ENCODE measurements at regions of chr6 and their contacts with region 1.

Region 1: DNA sequence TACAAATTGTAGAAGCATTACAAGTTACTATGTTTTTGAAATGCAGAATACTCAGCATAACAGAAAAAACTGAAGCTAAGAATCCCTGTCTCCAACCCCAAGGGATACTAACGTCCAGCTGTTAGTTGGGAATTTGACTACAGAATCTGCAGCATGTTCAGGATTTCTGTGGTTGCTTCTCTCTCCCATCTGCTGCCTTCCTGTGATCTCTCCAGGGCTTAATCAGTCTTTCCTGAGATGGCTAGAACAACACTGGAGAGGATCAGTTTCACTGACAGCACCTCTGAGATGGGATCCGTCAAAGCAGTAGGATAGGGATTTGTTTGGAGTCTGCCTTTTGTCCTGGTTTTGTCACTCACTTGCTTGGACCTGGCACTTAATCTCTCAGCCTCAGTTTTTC is 73.3 kb upstream of the NUP153 start:
- DNase-seq: no peak
- ATAC-seq: peak in 1 of 4 donors; percentile 37
- H3K4me3 ChIP-seq: no peak overlapping the region
- H3K27ac ChIP-seq: no peak overlapping the region
- H3K4me1 ChIP-seq: peaks cover 0 to 3% (median 0%) of the 10 kb centered on the region in 12 donors
- H3K27me3 ChIP-seq: no peaks in the 10 kb centered on the region
- CTCF ChIP-seq: no peak
- POLR2A ChIP-seq: no peak

Region 2: DNA sequence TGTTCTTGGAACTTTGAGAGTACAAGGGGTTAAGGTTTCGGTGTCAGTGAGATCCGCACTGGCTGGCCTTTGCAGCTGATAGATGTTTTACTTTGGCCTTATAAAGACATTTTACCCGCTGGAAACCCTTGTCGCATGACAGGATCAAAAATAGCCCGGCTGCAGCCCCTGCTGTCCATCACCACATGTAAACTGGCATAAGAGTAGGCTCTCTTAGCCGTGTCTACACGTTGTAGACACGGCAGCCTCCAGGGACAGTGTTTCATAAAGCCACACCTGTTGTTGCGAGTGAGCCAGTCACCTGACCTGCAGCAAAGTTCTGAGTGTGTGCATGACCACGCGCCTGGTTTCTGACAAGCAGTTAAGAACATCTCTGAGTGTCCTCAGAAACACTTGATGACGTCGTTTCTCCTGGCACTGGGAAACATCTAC is 490.4 kb before region 1 on chr6:
- intact Hi-C with region 1: no loop called
- DNase-seq: peak in 4 of 5 donors; percentile 67 to 87 (median 80)
- ATAC-seq: peak; percentile 89 to 94 (median 91)
- H3K4me3 ChIP-seq: peak overlapping the region in 10 of 12 donors; percentile 7 to 45 (median 35)
- H3K27ac ChIP-seq: peak overlapping the region; percentile 73 to 94 (median 80)
- H3K4me1 ChIP-seq: peaks cover 0 to 38% (median 8%) of the 10 kb centered on the region in 12 donors
- H3K27me3 ChIP-seq: no peaks in the 10 kb centered on the region
- CTCF ChIP-seq: no peak
- POLR2A ChIP-seq: peak in 1 of 2 donors; percentile 33

Region 3: GRCh38 chr6:17610835-17611234 is 169.2 kb before region 1 on chr6:
- intact Hi-C with region 1: loop called in 1 of 10 experiments (anchors 10 kb)
- DNase-seq: no peak
- ATAC-seq: no peak
- H3K4me3 ChIP-seq: no peak overlapping the region
- H3K27ac ChIP-seq: no peak overlapping the region
- H3K4me1 ChIP-seq: peaks cover 0 to 4% (median 0%) of the 10 kb centered on the region in 12 donors
- H3K27me3 ChIP-seq: no peaks in the 10 kb centered on the region
- CTCF ChIP-seq: no peak
- POLR2A ChIP-seq: no peak

Region 4: GRCh38 chr6:19312241-19312978 is 1532.3 kb after region 1 on chr6:
- intact Hi-C with region 1: no loop called
- DNase-seq: no peak
- ATAC-seq: no peak
- H3K4me3 ChIP-seq: no peak overlapping the region
- H3K27ac ChIP-seq: no peak overlapping the region
- H3K4me1 ChIP-seq: no peaks in the 10 kb centered on the region
- H3K27me3 ChIP-seq: no peaks in the 10 kb centered on the region
- CTCF ChIP-seq: no peak
- POLR2A ChIP-seq: no peak